ENCODE measurements at regions of chr19 and their contacts with region 1.

Region 1: GRCh38 chr19:58562195-58563033 is 4.0 kb upstream of the UBE2M start:
- DNase-seq: peak; percentile 46
- H3K4me3 Mint-ChIP-seq: peak overlapping the region; percentile 75
- H3K27ac Mint-ChIP-seq: peak overlapping the region; percentile 99
- H3K4me1 Mint-ChIP-seq: peaks cover 53% of the 10 kb centered on the region
- H3K27me3 Mint-ChIP-seq: no peaks in the 10 kb centered on the region

Region 2: DNA sequence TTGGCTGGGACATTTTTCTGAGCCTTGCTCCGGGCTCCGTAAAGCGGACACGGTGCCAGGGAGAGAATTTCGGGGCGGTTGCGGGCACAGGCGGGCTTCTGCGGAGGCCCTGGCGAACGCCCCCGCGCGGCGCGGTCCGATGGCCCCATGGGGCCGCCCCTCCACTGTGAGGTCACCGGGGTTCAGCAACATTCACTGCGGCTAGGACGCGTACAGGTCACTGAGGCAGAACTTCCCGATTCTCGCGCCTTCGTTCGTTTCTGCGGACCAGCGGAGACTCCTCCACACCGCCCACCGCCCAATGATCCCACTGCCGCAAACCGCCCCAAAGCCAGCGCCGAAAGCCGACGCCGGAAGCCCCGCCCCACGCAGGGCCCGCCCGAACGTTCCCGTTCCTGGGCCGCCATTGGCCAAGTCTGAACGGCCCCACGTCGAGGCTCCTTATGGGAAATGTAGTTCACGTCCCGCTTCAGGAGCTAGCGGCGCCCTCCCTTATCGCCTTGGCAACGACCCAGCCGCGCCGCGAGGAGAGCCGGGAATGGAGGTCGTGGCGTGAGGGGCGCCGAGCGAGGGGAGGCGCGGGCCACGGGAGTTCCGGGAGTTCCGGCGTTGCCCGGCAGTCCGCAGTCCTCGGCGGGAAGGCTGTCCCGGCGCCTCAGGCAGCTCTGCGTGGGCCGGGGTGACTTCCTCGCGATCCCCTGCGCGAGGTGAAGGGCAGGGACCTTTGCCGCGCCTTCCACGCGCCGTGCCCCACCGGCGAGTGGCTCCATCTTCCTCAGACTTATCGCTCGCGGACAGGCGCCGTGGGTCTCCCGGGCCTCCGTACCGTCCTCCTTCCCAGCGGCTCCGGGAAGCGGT is 154.0 kb before region 1 on chr19 and contains the start of gene ZNF584:
- CTCF ChIA-PET with region 1: no interaction called
- POLR2A ChIA-PET with region 1: no interaction called
- DNase-seq: peak; percentile 96
- H3K4me3 Mint-ChIP-seq: peak within 1 kb of the TSS; percentile 97
- H3K27ac Mint-ChIP-seq: peak within 1 kb of the TSS; percentile 90
- H3K4me1 Mint-ChIP-seq: peaks cover 35% of the 10 kb centered on the region
- H3K27me3 Mint-ChIP-seq: no peaks in the 10 kb centered on the region
- total RNA-seq, gene ZNF584: 6.7 to 6.8 TPM

Region 3: DNA sequence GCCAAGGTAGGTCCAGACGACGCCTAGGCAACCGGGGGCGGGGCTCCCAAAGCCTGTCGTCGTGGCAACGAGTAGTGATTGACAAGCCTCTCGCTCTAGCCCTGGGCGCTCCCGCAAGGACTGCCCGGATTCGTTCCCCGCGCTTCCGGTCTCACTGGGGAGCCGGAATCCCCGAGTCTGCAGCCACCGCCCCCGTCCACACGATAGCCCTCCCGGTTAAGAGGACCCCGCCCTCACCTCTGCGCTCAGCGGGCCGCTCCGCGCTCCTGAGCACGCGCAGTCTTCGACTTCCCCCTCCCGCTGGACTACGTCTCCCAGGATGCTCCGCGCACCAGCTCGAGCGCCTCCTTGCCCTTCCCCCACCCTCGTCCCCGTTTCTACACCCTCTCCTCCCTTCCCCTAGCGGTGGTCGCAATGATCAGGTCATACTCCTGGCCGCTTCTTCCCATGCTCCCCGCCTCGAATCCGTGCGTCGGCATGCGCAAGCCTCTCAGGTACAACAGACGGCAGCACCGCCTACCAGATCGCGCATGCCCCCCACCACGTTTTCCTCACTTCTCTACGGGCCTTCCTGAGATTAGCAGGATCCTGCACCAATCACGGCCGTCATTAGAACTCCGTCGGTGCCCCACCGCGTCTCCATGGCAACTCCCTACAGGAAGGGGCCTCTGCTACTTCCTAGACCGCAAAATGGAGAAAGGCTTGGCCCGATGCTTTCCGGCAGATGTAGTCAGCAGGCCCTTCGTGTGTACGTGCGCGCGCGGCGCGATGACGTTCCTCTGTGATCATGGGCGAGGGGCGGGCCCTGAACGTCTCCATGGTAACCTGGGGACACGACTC is 10.6 kb after region 1 on chr19 and contains the start of gene MZF1:
- CTCF ChIA-PET with region 1: interaction called, 14 read pairs
- POLR2A ChIA-PET with region 1: interaction called, 7 read pairs
- DNase-seq: peak; percentile 100
- H3K4me3 Mint-ChIP-seq: peak within 1 kb of the TSS; percentile 95
- H3K27ac Mint-ChIP-seq: peak within 1 kb of the TSS; percentile 99
- H3K4me1 Mint-ChIP-seq: peaks cover 48% of the 10 kb centered on the region
- H3K27me3 Mint-ChIP-seq: no peaks in the 10 kb centered on the region
- total RNA-seq, gene MZF1: 28.6 to 33.1 TPM

Measured in activated CD4-positive, alpha-beta T cell treated with anti-CD3 and anti-CD28 coated beads, Interleukin-2, amount 10 ng/mL, durations not matched to agents 7 days and 5 days (primary cell).